ENCODE measurements at regions of chr10 and their contacts with region 1.

Region 1: GRCh38 chr10:5629303-5630111 is 36.9 kb downstream of the ASB13 start:
- DNase-seq: peak; percentile 38
- H3K4me3 ChIP-seq: no peak overlapping the region
- CTCF ChIP-seq: peak; percentile 92

Region 2: DNA sequence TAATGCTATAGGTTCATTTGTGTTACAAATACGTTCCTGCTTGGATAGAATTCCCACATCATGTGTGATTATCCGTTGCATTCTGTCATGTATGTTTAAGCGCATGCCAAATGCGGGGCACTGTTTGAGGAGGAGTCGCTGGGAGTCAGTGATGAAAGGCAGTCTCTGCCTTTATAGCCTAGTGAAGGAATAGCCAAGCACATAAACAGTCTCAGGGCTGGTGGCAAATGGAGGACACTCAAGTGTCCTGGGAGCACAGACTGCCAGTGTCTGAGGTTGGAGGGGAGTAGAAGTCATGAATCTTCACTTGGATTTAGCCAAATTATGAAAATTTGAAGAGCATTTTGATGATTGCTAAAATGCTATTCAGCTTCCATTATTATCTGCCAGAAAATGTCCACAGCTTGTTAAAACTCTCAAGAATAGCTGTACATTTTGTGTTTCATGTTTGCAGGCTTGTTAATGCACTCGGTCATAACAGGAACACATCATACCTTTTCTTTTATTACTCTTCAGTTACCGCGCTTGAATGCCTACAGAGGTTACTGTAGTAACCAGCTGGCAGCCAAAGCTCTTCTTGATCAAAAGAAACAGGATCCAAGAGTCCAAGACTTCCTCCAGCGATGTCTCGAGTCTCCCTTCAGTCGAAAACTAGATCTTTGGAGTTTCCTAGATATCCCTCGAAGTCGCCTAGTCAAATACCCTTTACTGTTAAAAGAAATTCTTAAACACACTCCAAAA is 175.6 kb before region 1 on chr10:
- CTCF ChIA-PET with region 1: interaction called, 1,068 read pairs
- POLR2A ChIA-PET with region 1: no interaction called
- DNase-seq: no peak
- H3K4me3 ChIP-seq: no peak overlapping the region
- CTCF ChIP-seq: no peak

Region 3: DNA sequence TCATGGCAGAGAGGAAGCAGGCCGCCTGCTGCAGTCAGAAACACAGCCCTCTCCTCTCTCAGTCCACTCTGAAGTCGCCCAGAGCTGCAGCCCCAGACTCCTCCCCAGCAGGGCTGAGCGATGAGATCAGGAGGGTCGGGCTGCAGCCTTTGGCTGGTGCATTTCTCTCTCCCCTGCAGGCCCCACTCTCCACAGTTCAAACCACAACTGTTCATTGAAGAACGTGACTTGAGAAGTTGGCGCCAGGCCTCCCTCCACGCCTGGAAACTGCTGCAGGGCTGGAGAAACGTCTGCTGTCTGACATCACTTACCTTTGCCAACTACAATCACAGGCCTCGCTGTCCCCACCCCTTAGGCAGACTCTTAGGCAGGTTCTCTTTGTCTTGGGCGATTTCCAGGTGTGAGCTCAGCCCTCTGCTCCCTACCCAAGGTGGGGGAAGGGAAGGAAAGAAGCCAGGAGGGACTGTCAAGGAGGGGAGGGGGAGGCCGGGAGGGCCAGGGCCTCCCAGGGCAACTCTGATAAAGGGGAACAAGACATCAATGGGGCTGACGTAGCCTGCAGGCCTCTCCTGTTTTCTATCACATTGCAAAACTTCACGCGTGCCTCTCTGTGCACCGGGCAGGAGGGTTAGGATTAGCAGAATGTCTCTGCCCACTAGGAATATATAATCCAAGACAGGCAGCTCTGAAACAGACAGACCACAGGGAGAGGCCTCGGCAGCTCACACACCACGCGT is 162.9 kb before region 1 on chr10:
- CTCF ChIA-PET with region 1: interaction called, 43 read pairs
- POLR2A ChIA-PET with region 1: no interaction called
- DNase-seq: peak; percentile 37
- H3K4me3 ChIP-seq: no peak overlapping the region
- CTCF ChIP-seq: no peak

Region 4: GRCh38 chr10:5559642-5560141 is 69.8 kb before region 1 on chr10:
- CTCF ChIA-PET with region 1: no interaction called
- POLR2A ChIA-PET with region 1: no interaction called
- DNase-seq: no peak
- H3K4me3 ChIP-seq: no peak overlapping the region; the same call in 1 of the 2 replicates
- CTCF ChIP-seq: no peak

Region 5: GRCh38 chr10:5595591-5596590 is 33.6 kb before region 1 on chr10:
- CTCF ChIA-PET with region 1: interaction called, 40 read pairs
- POLR2A ChIA-PET with region 1: no interaction called
- DNase-seq: peak; percentile 73
- H3K4me3 ChIP-seq: peak overlapping the region; percentile 49
- CTCF ChIP-seq: no peak

Region 6: GRCh38 chr10:5614155-5614721 is 15.3 kb before region 1 on chr10:
- CTCF ChIA-PET with region 1: interaction called, 83 read pairs
- POLR2A ChIA-PET with region 1: interaction called, 3 read pairs
- DNase-seq: peak; percentile 28
- H3K4me3 ChIP-seq: no peak overlapping the region; the same call in 1 of the 2 replicates
- CTCF ChIP-seq: no peak

Region 7: GRCh38 chr10:5643346-5644067 is 14.0 kb after region 1 on chr10:
- CTCF ChIA-PET with region 1: interaction called, 39 read pairs
- POLR2A ChIA-PET with region 1: no interaction called
- DNase-seq: no peak
- H3K4me3 ChIP-seq: no peak overlapping the region
- CTCF ChIP-seq: no peak

Region 8: DNA sequence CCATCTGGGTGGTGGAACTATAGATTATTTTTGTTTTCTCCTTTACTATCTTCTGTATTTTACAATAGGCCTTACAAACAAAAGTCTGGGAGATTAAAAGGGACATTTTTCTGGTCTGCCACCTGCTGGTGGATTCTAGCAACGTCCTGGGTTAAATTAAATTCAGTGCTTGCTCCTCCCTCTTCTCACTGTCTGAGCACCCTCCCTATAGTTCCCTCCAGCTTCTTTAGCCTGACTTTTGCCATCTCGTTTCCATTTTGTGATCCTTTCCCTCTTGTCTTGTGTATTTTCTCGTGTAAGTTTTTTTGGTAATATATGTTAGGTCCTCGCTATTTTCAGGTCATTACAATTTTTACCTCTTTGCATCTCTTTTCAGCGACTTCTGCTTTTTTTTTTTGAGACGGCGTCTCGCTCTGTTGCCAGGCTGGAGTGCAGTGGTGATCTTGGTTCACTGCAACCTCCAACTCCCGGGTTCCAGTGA is 244.0 kb after region 1 on chr10:
- CTCF ChIA-PET with region 1: interaction called, 15 read pairs
- POLR2A ChIA-PET with region 1: no interaction called
- DNase-seq: no peak
- H3K4me3 ChIP-seq: no peak overlapping the region
- CTCF ChIP-seq: peak; percentile 50